Endothelial cell of umbilical vein (primary cell): ENCODE measurements at regions of chr2 and their contacts with region 1.

Region 1: DNA sequence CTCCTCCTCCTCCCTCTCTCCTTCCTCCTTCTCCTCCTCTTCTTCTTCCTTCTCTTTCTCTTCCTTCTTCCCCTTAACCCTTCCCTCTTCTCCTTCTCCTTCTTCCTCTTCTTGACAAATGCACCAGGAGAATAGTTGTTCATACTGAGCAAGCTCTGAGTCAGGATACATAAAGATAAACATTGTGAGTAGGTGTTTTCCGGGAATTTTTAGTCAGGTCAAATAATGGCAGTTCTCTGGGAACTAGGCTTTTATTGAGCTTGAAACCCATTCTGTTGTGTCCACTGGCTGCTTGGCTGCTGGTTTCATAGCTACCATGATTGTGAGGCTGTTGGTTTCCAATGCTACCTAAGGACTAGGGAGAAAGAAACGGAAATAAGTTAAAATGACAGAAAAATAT is 1144.7 kb upstream of the DDX18 start:
- DNase-seq: peak; percentile 3
- H3K4me3 ChIP-seq: no peak overlapping the region
- H3K27ac ChIP-seq: no peak overlapping the region
- H3K4me1 ChIP-seq: no peaks in the 10 kb centered on the region
- H3K27me3 ChIP-seq: no peaks in the 10 kb centered on the region
- CTCF ChIP-seq: no peak
- POLR2A ChIP-seq: no peak

Region 2: DNA sequence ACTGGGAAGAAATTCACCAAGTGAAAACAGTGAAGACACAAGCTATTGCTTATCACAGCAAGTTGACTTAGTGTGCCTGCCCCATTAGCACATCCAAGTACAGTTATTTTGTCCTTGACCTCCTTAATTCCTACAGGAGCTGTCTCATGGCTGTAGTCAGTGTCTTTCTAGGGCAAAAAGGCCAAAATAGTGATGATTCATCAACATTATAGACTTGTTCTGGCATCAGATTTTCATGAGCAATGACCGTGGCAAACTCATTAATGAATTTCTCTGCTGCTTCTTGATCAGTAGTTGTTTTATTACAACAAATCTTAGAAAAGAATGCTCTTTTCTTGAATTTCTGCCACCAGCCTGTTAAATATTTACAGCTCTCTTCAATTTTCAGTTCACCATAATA is 24.6 kb before region 1 on chr2:
- CTCF ChIA-PET with region 1: no interaction called
- POLR2A ChIA-PET with region 1: no interaction called
- dilution Hi-C with region 1: no loop called
- intact Hi-C with region 1: no loop called
- DNase-seq: no peak
- H3K4me3 ChIP-seq: no peak overlapping the region
- H3K27ac ChIP-seq: no peak overlapping the region
- H3K4me1 ChIP-seq: no peaks in the 10 kb centered on the region
- H3K27me3 ChIP-seq: no peaks in the 10 kb centered on the region
- CTCF ChIP-seq: no peak
- POLR2A ChIP-seq: no peak

Region 3: GRCh38 chr2:116706396-116706795 is 36.6 kb after region 1 on chr2:
- CTCF ChIA-PET with region 1: no interaction called
- POLR2A ChIA-PET with region 1: no interaction called
- dilution Hi-C with region 1: no loop called
- intact Hi-C with region 1: loop called (anchors 5 kb)
- DNase-seq: peak; percentile 10
- H3K4me3 ChIP-seq: no peak overlapping the region
- H3K27ac ChIP-seq: no peak overlapping the region
- H3K4me1 ChIP-seq: no peaks in the 10 kb centered on the region
- H3K27me3 ChIP-seq: no peaks in the 10 kb centered on the region
- CTCF ChIP-seq: no peak
- POLR2A ChIP-seq: no peak